ENCODE measurements at regions of chr17 and their contacts with region 1.

Region 1: GRCh38 chr17:50626037-50626574 is 8.6 kb upstream of the ABCC3 start:
- DNase-seq: no peak
- H3K4me3 ChIP-seq: no peak overlapping the region
- CTCF ChIP-seq: peak; percentile 92

Region 2: GRCh38 chr17:50478391-50479381 is 147.4 kb before region 1 on chr17 and contains the start of gene RSAD1:
- CTCF ChIA-PET with region 1: interaction called, 46 read pairs
- POLR2A ChIA-PET with region 1: no interaction called
- DNase-seq: peak; percentile 26
- H3K4me3 ChIP-seq: peak within 1 kb of the TSS; percentile 81
- CTCF ChIP-seq: peak; percentile 64

Region 3: DNA sequence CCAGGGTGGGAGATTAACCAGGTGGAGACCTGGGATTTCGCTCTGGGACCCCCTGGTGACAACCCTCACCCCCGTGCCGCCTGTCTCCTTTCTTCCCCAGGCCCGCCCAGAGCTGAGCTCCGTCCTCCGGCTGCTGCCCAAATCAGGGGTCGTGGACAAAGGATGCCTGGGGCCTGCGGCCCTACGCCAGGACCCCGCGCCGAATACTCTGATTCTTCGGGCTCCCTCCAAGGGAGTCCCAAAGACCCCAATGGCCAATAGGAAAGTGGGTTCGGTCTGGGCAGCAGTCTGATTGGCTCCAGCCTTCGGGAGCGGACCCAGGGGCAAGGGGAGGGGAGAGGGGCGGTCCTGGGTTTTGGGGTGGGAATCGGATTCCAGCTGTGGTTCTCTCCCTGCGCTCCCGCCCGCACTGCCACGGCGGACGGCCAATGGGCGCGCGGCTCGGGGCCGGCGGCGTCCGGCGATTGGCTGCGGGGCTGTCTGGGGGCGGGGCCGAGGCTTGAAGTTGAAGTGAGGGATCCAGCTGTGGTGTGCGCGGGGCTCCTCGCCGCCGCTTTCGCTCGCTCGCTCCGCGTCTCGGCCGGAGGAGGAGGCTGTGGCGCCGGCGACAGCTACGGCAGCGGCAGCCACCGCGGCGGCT is 65.8 kb before region 1 on chr17 and contains the start of gene CACNA1G:
- CTCF ChIA-PET with region 1: interaction called, 42 read pairs
- POLR2A ChIA-PET with region 1: interaction called, 3 read pairs
- DNase-seq: no peak
- H3K4me3 ChIP-seq: peak within 1 kb of the TSS; percentile 49
- CTCF ChIP-seq: no peak

Region 4: DNA sequence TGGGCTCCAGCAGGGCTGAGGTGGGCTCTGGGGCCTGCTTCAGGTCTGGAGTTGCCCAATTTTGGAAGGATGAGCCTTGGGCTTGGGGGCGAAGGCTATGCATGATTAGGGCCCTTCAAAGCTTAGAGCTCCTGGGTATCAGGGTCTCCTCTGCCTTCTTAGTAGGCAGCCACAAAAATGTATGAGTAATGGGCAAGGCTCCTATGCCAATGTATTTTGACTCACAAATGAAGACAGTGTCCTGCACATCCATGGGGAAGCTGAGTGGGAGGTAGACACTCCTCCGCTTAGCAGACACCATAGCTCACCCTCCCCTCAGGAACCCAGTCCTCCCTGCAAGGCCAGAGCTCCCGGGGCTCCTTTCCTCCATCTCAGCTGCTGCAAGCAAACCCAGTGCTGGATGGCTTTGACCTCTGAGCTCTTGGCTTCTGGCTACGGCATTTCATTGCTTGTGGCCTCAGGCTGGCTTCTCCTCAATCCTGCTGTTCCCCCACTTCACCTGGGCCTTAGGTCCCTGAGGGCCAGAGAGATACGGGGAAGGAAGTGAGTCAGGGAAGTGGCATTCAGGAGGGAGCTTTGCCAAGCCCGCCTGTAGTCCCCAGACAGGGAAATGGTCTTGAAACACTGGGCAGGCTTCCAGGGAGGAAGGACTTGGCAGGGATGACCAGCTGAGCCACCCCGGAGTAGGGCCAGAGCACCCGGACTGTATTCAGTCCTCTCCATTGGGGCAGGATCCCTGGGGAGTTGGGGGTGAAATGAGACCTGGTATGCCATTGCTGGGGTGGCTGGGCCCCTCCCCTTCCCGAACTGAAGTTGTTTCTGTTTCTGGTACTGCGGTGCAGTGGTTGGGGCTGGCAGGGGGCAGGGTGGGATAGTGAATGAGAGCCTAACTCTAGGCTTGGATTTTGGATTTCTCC is 13.0 kb after region 1 on chr17:
- CTCF ChIA-PET with region 1: interaction called, 166 read pairs
- POLR2A ChIA-PET with region 1: interaction called, 4 read pairs
- DNase-seq: peak; percentile 87
- H3K4me3 ChIP-seq: no peak overlapping the region
- CTCF ChIP-seq: no peak

Region 5: GRCh38 chr17:50661795-50662391 is 35.8 kb after region 1 on chr17:
- CTCF ChIA-PET with region 1: interaction called, 18 read pairs
- POLR2A ChIA-PET with region 1: no interaction called
- DNase-seq: peak; percentile 52
- H3K4me3 ChIP-seq: no peak overlapping the region
- CTCF ChIP-seq: no peak

Region 6: DNA sequence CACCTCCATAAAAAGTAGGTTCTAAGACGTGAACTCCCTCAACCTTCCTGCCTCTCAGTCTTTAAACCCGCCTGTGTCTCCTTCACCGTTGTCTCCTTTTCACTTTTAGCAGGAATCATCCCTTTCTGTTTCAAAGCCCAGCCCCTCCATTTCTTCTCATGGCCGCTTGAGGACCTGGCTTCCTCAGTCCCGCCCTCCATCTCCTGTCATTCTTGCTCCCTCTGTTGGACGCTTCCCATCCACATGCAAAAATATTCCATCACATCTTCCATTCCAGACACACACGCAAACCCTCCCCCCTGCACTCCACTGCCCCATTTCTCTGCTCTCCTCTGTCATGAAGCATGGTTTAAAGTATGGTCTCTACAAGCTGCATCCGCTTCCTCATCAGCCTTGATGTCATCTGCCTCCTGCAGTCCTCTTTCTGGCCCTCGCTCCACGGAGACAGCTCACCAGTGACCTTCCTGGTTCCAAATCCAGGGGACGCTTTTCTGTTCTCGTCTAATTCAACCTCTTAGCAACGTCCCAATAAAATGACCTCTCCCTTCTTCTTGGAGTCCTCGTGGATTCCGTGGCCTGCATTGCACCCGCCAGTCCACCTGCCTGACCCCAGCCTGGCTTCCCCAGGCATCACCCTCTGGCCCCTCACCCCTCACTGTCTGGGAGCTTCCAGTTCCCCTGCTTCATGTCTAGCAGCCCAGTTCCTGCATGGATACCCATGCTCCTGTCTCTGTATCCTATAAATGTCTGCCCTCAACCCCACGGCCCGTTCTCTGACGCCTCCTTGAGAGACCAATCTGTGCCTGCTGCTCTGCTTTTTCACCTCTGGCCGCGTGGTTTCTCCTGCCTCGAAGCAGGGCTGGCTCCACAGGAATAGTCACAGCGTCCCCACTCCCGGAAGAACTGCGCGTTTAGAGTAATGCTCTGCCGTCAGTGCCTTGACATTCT is 55.4 kb after region 1 on chr17:
- CTCF ChIA-PET with region 1: interaction called, 23 read pairs
- POLR2A ChIA-PET with region 1: no interaction called
- DNase-seq: no peak
- H3K4me3 ChIP-seq: no peak overlapping the region
- CTCF ChIP-seq: peak; percentile 80

Region 7: GRCh38 chr17:50697663-50698274 is 71.7 kb after region 1 on chr17:
- CTCF ChIA-PET with region 1: interaction called, 150 read pairs
- POLR2A ChIA-PET with region 1: no interaction called
- DNase-seq: no peak
- H3K4me3 ChIP-seq: no peak overlapping the region
- CTCF ChIP-seq: no peak

Region 8: GRCh38 chr17:51325471-51325870 is 699.4 kb after region 1 on chr17:
- CTCF ChIA-PET with region 1: no interaction called
- POLR2A ChIA-PET with region 1: no interaction called
- DNase-seq: no peak
- H3K4me3 ChIP-seq: no peak overlapping the region
- CTCF ChIP-seq: no peak

Measured in AG04449 (cell line).